ENCODE measurements at regions of chr10 and their contacts with region 1.

Region 1: DNA sequence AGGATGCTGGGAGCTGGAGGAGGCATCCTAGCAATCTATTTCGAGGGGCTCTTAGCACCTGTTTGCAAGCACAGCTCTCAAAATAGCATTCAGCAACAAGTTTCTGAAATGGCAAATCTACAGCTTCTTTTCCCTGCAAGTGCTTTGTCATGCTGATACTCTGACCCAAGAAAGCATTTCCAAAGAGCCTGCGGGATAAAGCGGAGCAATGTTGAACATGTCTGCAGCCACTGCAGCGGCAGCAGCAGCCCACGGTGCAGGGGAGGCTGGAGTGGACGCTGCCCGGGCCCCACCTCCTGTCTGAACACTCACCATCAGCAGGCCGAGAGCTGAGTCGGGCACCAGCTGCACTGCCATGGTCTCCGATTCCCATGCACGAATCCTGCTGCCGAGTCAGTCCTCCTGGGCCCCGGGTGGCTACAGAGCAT is 964 bp downstream of the FRMD4A start:
- DNase-seq: no peak
- ATAC-seq: no peak
- H3K4me3 ChIP-seq: no peak overlapping the region
- H3K4me3 Mint-ChIP-seq: no peak overlapping the region
- H3K27ac ChIP-seq: no peak overlapping the region
- H3K27ac Mint-ChIP-seq: no peak overlapping the region
- H3K4me1 ChIP-seq: no peaks in the 10 kb centered on the region
- H3K4me1 Mint-ChIP-seq: no peaks in the 10 kb centered on the region
- H3K27me3 ChIP-seq: peaks cover 0 to 25% of the 10 kb centered on the region in 2 experiments
- H3K27me3 Mint-ChIP-seq: peaks cover 32 to 49% of the 10 kb centered on the region in 2 donors

Region 2: GRCh38 chr10:12710594-12711349 is 1619.0 kb before region 1 on chr10:
- CTCF ChIA-PET with region 1: no interaction called
- POLR2A ChIA-PET with region 1: interaction called in 1 of 2 experiments, 11 read pairs
- DNase-seq: peak; percentile 48 to 83 (median 67)
- ATAC-seq: peak; percentile 77 to 84 (median 78)
- H3K4me3 ChIP-seq: no peak overlapping the region
- H3K4me3 Mint-ChIP-seq: no peak overlapping the region
- H3K27ac ChIP-seq: no peak overlapping the region
- H3K27ac Mint-ChIP-seq: peak overlapping the region in 1 of 2 donors; percentile 61
- H3K4me1 ChIP-seq: peaks cover 0 to 2% of the 10 kb centered on the region in 2 experiments
- H3K4me1 Mint-ChIP-seq: peaks cover 6 to 9% (median 9%) of the 10 kb centered on the region in 3 donors
- H3K27me3 ChIP-seq: no peaks in the 10 kb centered on the region
- H3K27me3 Mint-ChIP-seq: no peaks in the 10 kb centered on the region

Measured in T-cell (primary cell).